Psoas muscle (tissue), 8 donors: ENCODE measurements at regions of chr13 and their contacts with region 1.

Region 1: GRCh38 chr13:111216166-111216960 is 101.3 kb downstream of the ARHGEF7 start:
- DNase-seq: peak; percentile 43 to 72
- ATAC-seq: peak; percentile 67 to 79 (median 73)
- H3K4me3 ChIP-seq: no peak overlapping the region
- H3K27ac ChIP-seq: peak overlapping the region; percentile 88
- H3K4me1 ChIP-seq: peaks cover 91% of the 10 kb centered on the region
- H3K27me3 ChIP-seq: no peaks in the 10 kb centered on the region
- CTCF ChIP-seq: peak; percentile 55

Region 2: GRCh38 chr13:109747524-109747923 is 1468.8 kb before region 1 on chr13:
- intact Hi-C with region 1: no loop called
- DNase-seq: no peak
- ATAC-seq: no peak
- H3K4me3 ChIP-seq: no peak overlapping the region
- H3K27ac ChIP-seq: no peak overlapping the region
- H3K4me1 ChIP-seq: no peaks in the 10 kb centered on the region
- H3K27me3 ChIP-seq: no peaks in the 10 kb centered on the region
- CTCF ChIP-seq: no peak

Region 3: DNA sequence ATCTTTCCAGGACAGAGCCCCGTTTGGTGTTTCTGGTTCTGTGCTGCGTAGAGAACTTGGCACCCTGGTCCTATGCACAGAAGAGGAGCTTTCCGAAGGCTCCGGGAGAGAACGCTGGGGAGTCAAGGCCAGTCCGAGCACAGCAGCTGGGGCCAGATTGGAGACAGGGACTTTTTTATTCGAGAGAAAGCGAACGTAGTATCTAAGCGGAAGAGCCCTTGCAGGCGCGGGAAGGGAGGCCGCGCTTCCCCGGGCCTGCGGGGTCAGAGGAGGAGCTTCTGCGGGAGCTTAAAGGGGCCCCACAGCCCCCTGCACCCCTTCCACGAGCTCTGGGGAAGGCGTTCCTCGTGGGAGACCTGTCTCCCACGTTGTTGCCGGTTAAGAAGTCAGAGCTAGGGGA is 149.8 kb before region 1 on chr13:
- intact Hi-C with region 1: loop called in 1 of 2 experiments (anchors 5 kb)
- DNase-seq: no peak
- ATAC-seq: peak in 2 of 4 donors; percentile 7 to 13
- H3K4me3 ChIP-seq: peak overlapping the region; percentile 71
- H3K27ac ChIP-seq: no peak overlapping the region
- H3K4me1 ChIP-seq: peaks cover 5% of the 10 kb centered on the region
- H3K27me3 ChIP-seq: peaks cover 0 to 2% (median 0%) of the 10 kb centered on the region in 3 donors
- CTCF ChIP-seq: no peak

Region 4: DNA sequence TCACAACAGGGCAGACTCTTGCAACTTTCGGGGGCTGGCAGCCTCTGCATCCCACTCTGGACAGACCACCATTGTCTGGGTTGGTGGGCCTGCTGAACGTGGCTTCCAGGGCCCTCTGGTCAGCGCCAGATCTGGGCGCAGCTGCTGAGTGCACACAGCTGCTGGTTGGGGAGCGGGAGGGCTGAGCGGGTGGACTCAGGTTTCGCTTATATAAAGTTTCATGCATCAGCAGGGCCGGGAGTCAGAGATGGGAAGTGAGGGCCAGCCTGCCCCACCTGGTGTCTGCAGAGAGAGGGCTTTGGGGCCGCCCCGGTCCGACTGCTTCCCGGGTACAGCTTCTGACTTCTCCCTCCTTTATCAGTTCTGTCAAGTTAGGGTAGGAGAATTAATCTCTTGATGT is 94.3 kb before region 1 on chr13:
- intact Hi-C with region 1: loop called in 1 of 2 experiments (anchors 2 kb)
- DNase-seq: peak; percentile 65 to 83
- ATAC-seq: peak; percentile 97 to 98 (median 97)
- H3K4me3 ChIP-seq: peak overlapping the region; percentile 43
- H3K27ac ChIP-seq: peak overlapping the region; percentile 91
- H3K4me1 ChIP-seq: peaks cover 28% of the 10 kb centered on the region
- H3K27me3 ChIP-seq: no peaks in the 10 kb centered on the region
- CTCF ChIP-seq: peak; percentile 27

Region 5: GRCh38 chr13:111153279-111153976 is 62.9 kb before region 1 on chr13:
- intact Hi-C with region 1: loop called in 1 of 2 experiments (anchors 2 kb)
- DNase-seq: peak; percentile 95 to 97
- ATAC-seq: peak; percentile 96
- H3K4me3 ChIP-seq: peak overlapping the region; percentile 83
- H3K27ac ChIP-seq: peak overlapping the region; percentile 96
- H3K4me1 ChIP-seq: peaks cover 33% of the 10 kb centered on the region
- H3K27me3 ChIP-seq: no peaks in the 10 kb centered on the region
- CTCF ChIP-seq: peak; percentile 2

Region 6: GRCh38 chr13:111177081-111177711 is 39.2 kb before region 1 on chr13:
- intact Hi-C with region 1: loop called in 1 of 2 experiments (anchors 5 kb)
- DNase-seq: peak; percentile 51 to 65
- ATAC-seq: peak; percentile 79 to 88 (median 84)
- H3K4me3 ChIP-seq: peak overlapping the region; percentile 3
- H3K27ac ChIP-seq: peak overlapping the region; percentile 77
- H3K4me1 ChIP-seq: peaks cover 87% of the 10 kb centered on the region
- H3K27me3 ChIP-seq: no peaks in the 10 kb centered on the region
- CTCF ChIP-seq: no peak